Activated B cell treated with CpG ODN at 0.5 μM for 24 hours (primary cell): ENCODE measurements at regions of chr12 and their contacts with region 1.

Region 1: DNA sequence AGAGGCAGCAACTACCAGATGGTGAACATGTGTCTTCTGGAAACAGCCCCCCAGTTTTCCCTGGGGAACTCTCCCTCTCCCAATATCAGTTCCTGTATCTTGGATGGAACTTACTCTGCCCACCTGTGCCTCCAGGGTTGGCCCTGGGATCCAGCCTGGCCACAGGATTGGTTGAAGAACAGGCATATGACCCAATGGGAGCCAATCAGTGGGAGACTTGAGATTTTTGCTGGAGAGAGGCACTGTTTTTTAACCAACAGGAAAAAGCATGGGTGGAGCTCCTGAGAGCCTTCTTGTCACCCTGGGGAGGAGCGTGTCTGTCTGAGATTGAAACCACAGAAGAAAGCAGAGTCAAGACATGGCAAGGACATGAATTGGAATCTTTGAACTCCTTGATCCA is 33.6 kb upstream of the COX6A1 start:
- DNase-seq: no peak
- ATAC-seq: no peak
- H3K4me3 Mint-ChIP-seq: no peak overlapping the region
- H3K27ac Mint-ChIP-seq: no peak overlapping the region
- H3K4me1 Mint-ChIP-seq: no peaks in the 10 kb centered on the region
- H3K27me3 Mint-ChIP-seq: peaks cover 23% of the 10 kb centered on the region
- CTCF ChIP-seq: no peak

Region 2: DNA sequence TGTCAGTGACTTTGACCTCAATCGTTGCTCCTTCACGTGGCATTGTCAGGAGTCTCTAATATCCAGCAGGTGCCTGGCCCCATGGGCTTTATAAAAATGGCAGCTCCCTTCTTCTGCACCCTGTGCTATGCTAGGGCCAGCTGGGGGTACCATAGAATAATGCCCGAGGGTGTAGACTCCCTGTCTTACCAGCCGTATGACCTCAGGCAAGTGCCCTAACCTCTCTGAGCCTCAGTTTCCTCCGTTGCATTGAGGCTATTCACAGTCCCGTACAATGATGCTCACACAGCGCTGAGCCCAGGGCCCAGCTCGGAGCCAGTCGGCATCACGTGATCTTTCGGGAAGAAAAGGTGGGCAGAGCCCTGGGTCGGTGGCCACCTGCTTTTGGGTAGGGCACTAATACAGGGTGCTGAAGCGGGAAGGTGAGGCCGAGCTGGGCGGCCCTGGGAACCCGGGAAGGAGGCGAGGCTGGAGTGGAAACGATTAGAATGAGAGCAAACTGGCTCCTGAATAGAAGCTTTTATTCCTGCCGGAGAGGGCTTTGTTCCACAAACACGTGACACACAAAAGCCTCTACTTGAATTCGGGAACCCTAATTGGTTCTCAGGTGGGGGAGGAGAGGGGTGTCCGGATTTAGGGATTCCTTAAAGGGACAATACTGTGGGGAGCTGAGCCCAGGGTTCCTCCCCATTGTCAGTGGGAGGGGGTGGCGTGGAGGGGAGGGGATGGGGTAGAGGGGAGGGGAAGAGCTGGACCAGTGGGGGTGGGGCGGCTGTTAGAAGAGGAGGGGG is 15.4 kb before region 1 on chr12:
- CTCF ChIA-PET with region 1: no interaction called
- POLR2A ChIA-PET with region 1: interaction called, 11 read pairs
- intact Hi-C with region 1: no loop called
- DNase-seq: no peak
- ATAC-seq: no peak
- H3K4me3 Mint-ChIP-seq: no peak overlapping the region
- H3K27ac Mint-ChIP-seq: no peak overlapping the region
- H3K4me1 Mint-ChIP-seq: peaks cover 2% of the 10 kb centered on the region
- H3K27me3 Mint-ChIP-seq: peaks cover 37% of the 10 kb centered on the region
- CTCF ChIP-seq: no peak

Region 3: DNA sequence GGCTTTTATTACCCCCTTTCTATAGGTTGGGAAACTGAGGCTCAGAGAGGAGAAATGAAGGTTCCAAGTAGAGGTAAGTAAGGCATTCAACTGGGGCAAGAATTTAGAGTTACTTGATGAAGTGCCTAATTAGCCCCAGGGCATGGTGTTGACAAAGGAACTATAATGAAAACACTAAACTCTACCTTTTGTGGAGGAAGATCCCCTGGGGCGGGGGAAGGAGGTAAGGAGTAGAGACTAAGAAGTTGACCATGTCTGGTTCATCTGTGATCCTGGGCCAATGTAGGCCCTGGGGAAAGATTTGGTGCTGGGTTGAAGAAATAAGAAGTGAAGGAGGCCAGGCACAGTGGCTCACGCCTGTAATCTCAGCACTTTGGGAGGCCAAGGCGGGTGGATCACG is 17.4 kb after region 1 on chr12:
- CTCF ChIA-PET with region 1: no interaction called
- POLR2A ChIA-PET with region 1: interaction called, 13 read pairs
- intact Hi-C with region 1: no loop called
- DNase-seq: no peak
- ATAC-seq: no peak
- H3K4me3 Mint-ChIP-seq: no peak overlapping the region
- H3K27ac Mint-ChIP-seq: no peak overlapping the region
- H3K4me1 Mint-ChIP-seq: no peaks in the 10 kb centered on the region
- H3K27me3 Mint-ChIP-seq: peaks cover 2% of the 10 kb centered on the region
- CTCF ChIP-seq: no peak